ENCODE measurements at regions of chr11 and their contacts with region 1.

Region 1: DNA sequence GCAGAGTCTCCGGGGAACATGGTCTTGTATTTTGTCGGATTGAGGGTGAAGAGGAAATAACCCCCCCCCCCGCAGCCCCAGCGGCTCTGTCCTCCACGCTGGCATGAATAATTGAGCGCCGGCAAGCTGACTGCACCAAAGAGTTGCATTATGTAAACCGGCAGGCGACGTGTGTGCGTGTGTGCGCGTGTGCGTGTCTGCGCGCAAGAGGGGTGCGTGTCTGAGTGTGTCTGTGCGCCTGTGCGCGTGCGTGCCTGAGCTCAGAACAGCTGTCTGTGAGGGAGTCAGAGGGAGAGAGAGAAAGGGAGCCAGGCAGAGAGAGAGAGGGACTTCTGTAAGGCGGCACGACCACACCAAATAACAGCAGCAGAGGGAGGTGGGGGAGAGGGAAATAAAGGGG is 94.4 kb downstream of the SCN3B start:
- DNase-seq: no peak
- ATAC-seq: peak; percentile 31
- H3K4me3 Mint-ChIP-seq: peak overlapping the region; percentile 55
- H3K27ac Mint-ChIP-seq: peak overlapping the region; percentile 82; the same call in 1 of the 2 replicates
- H3K4me1 Mint-ChIP-seq: peaks cover 42% of the 10 kb centered on the region
- H3K27me3 Mint-ChIP-seq: no peaks in the 10 kb centered on the region
- CTCF ChIP-seq: no peak

Region 2: GRCh38 chr11:123460012-123460700 is 99.8 kb before region 1 on chr11:
- CTCF ChIA-PET with region 1: no interaction called
- POLR2A ChIA-PET with region 1: no interaction called
- DNase-seq: no peak
- ATAC-seq: no peak
- H3K4me3 Mint-ChIP-seq: no peak overlapping the region
- H3K27ac Mint-ChIP-seq: no peak overlapping the region; the same call in 1 of the 2 replicates
- H3K4me1 Mint-ChIP-seq: no peaks in the 10 kb centered on the region
- H3K27me3 Mint-ChIP-seq: no peaks in the 10 kb centered on the region
- CTCF ChIP-seq: no peak

Region 3: DNA sequence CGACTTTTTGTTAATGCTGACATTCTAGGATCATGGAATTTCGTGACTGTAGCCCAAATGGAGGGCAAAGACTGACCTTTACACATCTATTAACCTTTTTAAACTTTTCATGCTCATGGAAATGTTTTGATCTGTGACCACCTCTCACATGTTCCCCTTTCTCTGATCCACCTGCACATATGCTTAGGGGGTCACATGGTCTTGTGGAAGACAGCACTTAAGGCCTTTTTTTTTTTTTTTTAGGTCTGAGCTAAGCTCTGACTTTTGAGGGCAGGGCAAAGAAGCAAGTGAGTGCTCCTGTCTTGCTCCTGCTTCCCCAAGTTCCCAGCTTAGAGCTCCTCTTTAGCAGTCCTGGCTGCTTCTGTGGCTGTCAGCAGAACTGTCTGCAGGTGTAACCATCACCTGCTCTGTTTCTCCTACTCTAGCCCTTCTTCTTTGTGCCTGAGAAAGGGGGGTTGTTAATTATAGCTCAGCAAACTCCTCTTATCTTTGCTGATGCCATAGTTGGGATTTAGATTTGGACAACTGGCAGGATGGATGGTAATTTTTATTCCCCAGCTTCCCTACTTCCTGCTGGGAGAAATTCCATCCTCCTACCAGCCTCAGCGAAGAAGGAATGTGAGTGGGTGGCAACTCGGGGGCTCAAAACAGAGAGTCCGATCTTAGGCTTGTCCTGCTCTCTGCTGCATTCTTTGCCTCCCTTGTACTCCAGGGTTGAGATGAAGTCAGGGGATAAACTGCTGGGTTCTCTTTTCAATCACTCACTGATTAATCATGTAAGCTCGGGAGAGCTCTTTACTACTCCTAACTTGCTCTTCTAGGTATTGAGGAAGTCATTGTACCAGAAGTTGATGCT is 65.6 kb before region 1 on chr11:
- CTCF ChIA-PET with region 1: interaction called, 23 read pairs
- POLR2A ChIA-PET with region 1: no interaction called
- DNase-seq: no peak
- ATAC-seq: peak; percentile 65
- H3K4me3 Mint-ChIP-seq: no peak overlapping the region
- H3K27ac Mint-ChIP-seq: peak overlapping the region; percentile 64; the same call in 1 of the 2 replicates
- H3K4me1 Mint-ChIP-seq: peaks cover 31% of the 10 kb centered on the region
- H3K27me3 Mint-ChIP-seq: no peaks in the 10 kb centered on the region
- CTCF ChIP-seq: no peak

Region 4: DNA sequence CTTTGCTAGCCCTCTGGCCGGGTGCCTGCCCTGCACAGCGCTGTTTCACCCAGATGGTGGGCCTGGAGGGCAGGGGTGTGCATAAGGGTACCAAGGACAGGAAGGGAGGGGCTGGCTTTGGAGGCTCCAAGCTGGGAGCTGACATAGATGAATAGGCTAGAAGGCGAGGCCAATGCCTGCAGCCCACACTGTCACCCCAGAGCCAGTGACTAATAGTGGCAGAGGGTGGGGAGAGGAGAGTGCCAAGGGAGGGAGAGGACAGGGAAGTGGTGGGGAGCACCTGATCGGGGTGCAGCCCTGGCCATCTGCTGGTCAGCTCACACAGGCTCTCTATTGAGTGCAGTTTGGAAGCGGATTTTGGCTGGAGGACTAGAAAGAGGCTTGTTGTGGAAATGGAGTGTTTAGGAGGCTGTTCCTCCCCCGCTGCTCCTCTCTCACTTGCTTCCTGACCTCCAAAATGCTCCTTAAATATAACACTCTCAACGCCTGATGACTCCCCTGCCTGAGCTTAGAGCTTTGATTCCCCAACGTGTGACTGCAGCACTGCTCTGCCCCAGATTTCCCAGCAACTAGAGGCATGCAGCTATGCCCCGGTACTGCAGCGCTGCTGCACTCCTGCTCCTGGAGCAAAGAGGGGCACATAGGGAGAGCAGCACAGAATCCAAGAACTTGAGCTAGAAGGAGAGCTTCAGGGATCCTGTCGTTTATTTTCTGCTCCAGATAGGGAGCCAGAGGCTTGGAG is 40.8 kb before region 1 on chr11:
- CTCF ChIA-PET with region 1: interaction called, 27 read pairs
- POLR2A ChIA-PET with region 1: no interaction called
- DNase-seq: no peak
- ATAC-seq: peak; percentile 71
- H3K4me3 Mint-ChIP-seq: no peak overlapping the region
- H3K27ac Mint-ChIP-seq: peak overlapping the region; percentile 60; the same call in 1 of the 2 replicates
- H3K4me1 Mint-ChIP-seq: peaks cover 47% of the 10 kb centered on the region
- H3K27me3 Mint-ChIP-seq: no peaks in the 10 kb centered on the region
- CTCF ChIP-seq: no peak

Region 5: GRCh38 chr11:123536690-123537437 is 23.1 kb before region 1 on chr11:
- CTCF ChIA-PET with region 1: interaction called, 40 read pairs
- POLR2A ChIA-PET with region 1: interaction called, 4 read pairs
- DNase-seq: no peak
- ATAC-seq: peak; percentile 82
- H3K4me3 Mint-ChIP-seq: peak overlapping the region; percentile 16
- H3K27ac Mint-ChIP-seq: peak overlapping the region; percentile 97
- H3K4me1 Mint-ChIP-seq: peaks cover 53% of the 10 kb centered on the region
- H3K27me3 Mint-ChIP-seq: no peaks in the 10 kb centered on the region
- CTCF ChIP-seq: no peak

Region 6: GRCh38 chr11:123570939-123571580 is 11.1 kb after region 1 on chr11:
- CTCF ChIA-PET with region 1: interaction called, 50 read pairs
- POLR2A ChIA-PET with region 1: no interaction called
- DNase-seq: no peak
- ATAC-seq: no peak
- H3K4me3 Mint-ChIP-seq: no peak overlapping the region
- H3K27ac Mint-ChIP-seq: 0 out of 2 replicates have a peak overlapping the region, but pooled peaks have one; percentile 12
- H3K4me1 Mint-ChIP-seq: peaks cover 61% of the 10 kb centered on the region
- H3K27me3 Mint-ChIP-seq: no peaks in the 10 kb centered on the region
- CTCF ChIP-seq: no peak